ENCODE measurements at regions of chr1 and their contacts with region 1.

Region 1: GRCh38 chr1:66542811-66543767 is 9.1 kb downstream of the SGIP1 start:
- DNase-seq: peak; percentile 77

Region 2: GRCh38 chr1:66262211-66262963 is 280.7 kb before region 1 on chr1:
- intact Hi-C with region 1: loop called (anchors 5 kb)
- DNase-seq: no peak

Region 3: GRCh38 chr1:66676613-66677298 is 133.7 kb after region 1 on chr1:
- intact Hi-C with region 1: loop called (anchors 5 kb)
- DNase-seq: no peak